ENCODE measurements at regions of chr12 and their contacts with region 1.

Region 1: GRCh38 chr12:46382964-46383653 is 10.5 kb upstream of the SLC38A2 start:
- DNase-seq: peak; percentile 93
- ATAC-seq: peak; percentile 87
- H3K4me3 ChIP-seq: peak overlapping the region; percentile 67 to 90 (median 73); a peak in 5 of 6 replicates
- H3K27ac ChIP-seq: peak overlapping the region; percentile 98
- H3K4me1 ChIP-seq: peaks cover 68% of the 10 kb centered on the region
- H3K27me3 ChIP-seq: no peaks in the 10 kb centered on the region; a peak in 1 of 5 replicates
- CTCF ChIP-seq: peak; percentile 60
- EP300 ChIP-seq: peak; percentile 39 to 86; a peak in 2 of 4 replicates
- POLR2A ChIP-seq: peak in 1 of 2 experiments; percentile 65; a peak in 2 of 4 replicates
- RAD21 ChIP-seq: peak; percentile 72

Region 2: DNA sequence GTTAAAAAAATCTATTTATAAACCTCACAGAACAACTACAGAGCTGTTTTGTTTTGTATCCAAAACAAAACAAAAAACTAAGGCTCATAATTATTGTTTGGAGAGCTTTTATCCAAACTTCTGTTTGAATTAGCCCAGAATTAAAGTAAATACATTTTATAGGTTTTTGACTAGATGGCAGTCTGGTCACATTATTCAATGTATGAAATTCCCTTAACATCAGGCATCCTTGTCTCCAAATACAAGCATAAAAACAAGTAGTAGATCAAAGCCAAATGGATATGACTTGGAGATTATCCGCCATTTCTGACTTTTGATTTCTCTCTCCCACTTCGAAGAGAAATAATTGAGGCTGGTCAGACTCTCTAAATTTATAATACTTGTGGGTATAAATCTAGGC is 177.8 kb before region 1 on chr12:
- CTCF ChIA-PET with region 1: no interaction called
- POLR2A ChIA-PET with region 1: no interaction called
- in situ Hi-C with region 1: no loop called
- intact Hi-C with region 1: no loop called
- DNase-seq: no peak
- ATAC-seq: no peak
- H3K4me3 ChIP-seq: no peak overlapping the region
- H3K27ac ChIP-seq: no peak overlapping the region
- H3K4me1 ChIP-seq: peaks cover 11% of the 10 kb centered on the region
- H3K27me3 ChIP-seq: no peaks in the 10 kb centered on the region
- CTCF ChIP-seq: no peak
- EP300 ChIP-seq: no peak
- POLR2A ChIP-seq: no peak
- RAD21 ChIP-seq: no peak

Region 3: DNA sequence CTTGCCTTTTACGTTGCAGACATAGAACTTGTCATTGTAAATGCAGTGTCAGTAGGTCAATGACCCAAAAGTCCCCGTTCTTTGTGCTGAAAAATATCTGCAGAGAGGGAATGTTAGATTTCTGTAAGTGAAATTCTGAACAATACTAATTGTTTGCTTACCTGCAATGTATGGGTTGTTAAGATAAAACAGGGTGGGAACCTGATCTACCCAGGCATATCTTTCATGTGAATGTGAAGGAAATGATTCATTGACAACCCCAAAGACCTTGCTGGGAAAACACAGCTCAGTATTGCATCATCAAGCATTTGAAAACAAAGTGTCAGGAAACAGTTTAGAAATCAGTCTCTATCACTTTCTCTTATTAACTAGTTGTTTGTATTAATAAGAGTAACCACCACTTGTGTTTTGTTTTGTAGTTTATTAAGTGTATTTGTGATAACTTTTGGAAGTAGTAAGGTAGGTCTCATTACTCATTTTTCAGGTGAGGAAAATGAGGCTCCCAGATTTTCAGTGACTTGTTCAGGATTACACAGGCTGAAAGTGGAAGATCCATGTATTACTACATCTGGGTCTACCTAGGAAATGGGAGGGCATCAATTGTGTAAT is 47.3 kb after region 1 on chr12:
- CTCF ChIA-PET with region 1: no interaction called
- POLR2A ChIA-PET with region 1: interaction called, 4 read pairs
- in situ Hi-C with region 1: loop called (anchors 5 kb)
- intact Hi-C with region 1: no loop called
- DNase-seq: peak; percentile 95
- ATAC-seq: peak; percentile 90
- H3K4me3 ChIP-seq: peak overlapping the region in 1 of 3 experiments; percentile 2; a peak in 2 of 6 replicates
- H3K27ac ChIP-seq: peak overlapping the region; percentile 58
- H3K4me1 ChIP-seq: peaks cover 37% of the 10 kb centered on the region
- H3K27me3 ChIP-seq: no peaks in the 10 kb centered on the region
- CTCF ChIP-seq: no peak
- EP300 ChIP-seq: peak in 1 of 2 experiments; percentile 92; a peak in 2 of 4 replicates
- POLR2A ChIP-seq: no peak
- RAD21 ChIP-seq: no peak

Region 4: DNA sequence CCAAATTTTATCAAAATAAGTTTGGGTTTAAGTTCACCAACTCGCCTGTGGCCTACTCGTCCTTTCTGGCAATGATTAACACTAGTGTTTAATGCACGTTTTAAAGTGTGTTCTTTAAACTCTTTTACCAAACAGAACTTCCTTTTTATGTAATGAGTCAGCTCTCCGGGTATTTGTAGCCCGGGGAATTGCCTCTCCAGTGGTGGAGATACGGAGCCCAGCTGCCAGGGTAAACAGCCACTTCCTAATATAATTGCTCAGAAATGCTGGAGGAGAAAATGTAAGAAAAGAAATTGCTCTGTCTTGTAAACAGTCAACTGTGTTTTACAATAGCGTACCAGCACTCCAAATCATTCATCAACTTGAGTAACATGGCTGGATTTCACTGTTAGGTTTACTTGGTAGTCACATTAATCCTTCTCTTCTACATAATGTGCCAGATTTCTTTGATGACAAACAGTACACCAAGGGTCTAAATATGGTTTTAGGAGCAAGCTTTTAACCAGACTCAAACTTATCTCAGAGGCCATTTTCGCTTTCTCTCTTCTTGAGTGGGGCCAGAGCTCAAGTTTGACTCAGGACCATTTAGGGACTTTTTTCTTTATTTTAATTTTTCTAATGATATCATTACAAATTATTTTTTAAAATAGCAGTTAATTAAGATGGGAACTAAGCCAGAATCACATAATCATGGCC is 90.7 kb after region 1 on chr12:
- CTCF ChIA-PET with region 1: no interaction called
- POLR2A ChIA-PET with region 1: interaction called, 8 read pairs
- in situ Hi-C with region 1: no loop called
- intact Hi-C with region 1: loop called (anchors 1 kb)
- DNase-seq: peak; percentile 95
- ATAC-seq: peak; percentile 97
- H3K4me3 ChIP-seq: peak overlapping the region; percentile 14 to 40 (median 17); a peak in 4 of 6 replicates
- H3K27ac ChIP-seq: peak overlapping the region; percentile 89
- H3K4me1 ChIP-seq: peaks cover 93% of the 10 kb centered on the region
- H3K27me3 ChIP-seq: no peaks in the 10 kb centered on the region
- CTCF ChIP-seq: no peak
- EP300 ChIP-seq: peak in 1 of 2 experiments; percentile 98; a peak in 2 of 4 replicates
- POLR2A ChIP-seq: no peak
- RAD21 ChIP-seq: no peak

Region 5: DNA sequence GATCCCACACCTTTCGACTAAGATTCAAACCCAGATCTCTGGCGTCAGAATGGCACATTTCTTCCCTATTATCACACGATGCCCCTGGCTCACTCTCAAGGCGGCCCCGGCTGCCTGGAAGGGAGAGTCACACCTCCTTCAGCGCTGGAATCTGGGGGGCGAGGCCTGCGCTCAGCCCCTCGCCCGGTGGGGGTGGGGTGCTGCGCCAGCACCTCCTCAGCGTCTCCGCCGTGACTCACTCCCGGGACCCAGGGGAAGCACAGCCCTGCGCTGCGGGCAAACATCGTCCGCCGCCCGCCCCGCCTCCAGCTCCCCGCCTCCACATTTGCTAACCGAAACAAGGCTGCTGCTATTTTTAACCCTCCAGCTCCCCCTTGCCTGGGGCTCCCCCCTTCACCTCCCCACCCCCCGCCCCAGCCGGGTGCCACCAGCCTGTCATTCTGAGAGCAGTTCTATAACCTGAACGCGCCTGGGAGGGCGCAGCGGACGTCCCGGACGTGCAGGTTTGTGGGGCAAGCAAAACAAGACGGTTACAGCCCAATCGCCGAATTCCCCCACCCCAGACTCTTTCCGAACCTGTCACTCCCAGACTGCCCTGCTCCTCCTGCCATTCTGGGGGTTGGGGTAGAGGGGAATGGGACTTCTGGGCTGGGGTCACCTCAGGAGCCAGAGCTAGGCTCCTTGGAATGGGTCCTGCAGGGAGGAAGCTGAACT is 1429.8 kb after region 1 on chr12:
- CTCF ChIA-PET with region 1: no interaction called
- POLR2A ChIA-PET with region 1: no interaction called
- in situ Hi-C with region 1: no loop called
- intact Hi-C with region 1: no loop called
- DNase-seq: peak; percentile 36
- ATAC-seq: peak; percentile 53
- H3K4me3 ChIP-seq: peak overlapping the region; percentile 31 to 55 (median 45)
- H3K27ac ChIP-seq: no peak overlapping the region
- H3K4me1 ChIP-seq: peaks cover 20% of the 10 kb centered on the region
- H3K27me3 ChIP-seq: no peaks in the 10 kb centered on the region
- CTCF ChIP-seq: no peak
- EP300 ChIP-seq: no peak
- POLR2A ChIP-seq: no peak
- RAD21 ChIP-seq: no peak